H1 (cell line): ENCODE measurements at regions of chr18 and their contacts with region 1.

Region 1: GRCh38 chr18:8357320-8357719 is 251.9 kb upstream of the RAB12 start:
- DNase-seq: no peak
- H3K4me3 ChIP-seq: no peak overlapping the region
- H3K27ac ChIP-seq: no peak overlapping the region
- H3K4me1 ChIP-seq: peaks cover 3 to 15% (median 7%) of the 10 kb centered on the region in 4 experiments; a peak in 6 of 7 replicates
- H3K27me3 ChIP-seq: no peaks in the 10 kb centered on the region
- CTCF ChIP-seq: no peak
- EP300 ChIP-seq: no peak
- POLR2A ChIP-seq: no peak
- RAD21 ChIP-seq: no peak

Region 2: DNA sequence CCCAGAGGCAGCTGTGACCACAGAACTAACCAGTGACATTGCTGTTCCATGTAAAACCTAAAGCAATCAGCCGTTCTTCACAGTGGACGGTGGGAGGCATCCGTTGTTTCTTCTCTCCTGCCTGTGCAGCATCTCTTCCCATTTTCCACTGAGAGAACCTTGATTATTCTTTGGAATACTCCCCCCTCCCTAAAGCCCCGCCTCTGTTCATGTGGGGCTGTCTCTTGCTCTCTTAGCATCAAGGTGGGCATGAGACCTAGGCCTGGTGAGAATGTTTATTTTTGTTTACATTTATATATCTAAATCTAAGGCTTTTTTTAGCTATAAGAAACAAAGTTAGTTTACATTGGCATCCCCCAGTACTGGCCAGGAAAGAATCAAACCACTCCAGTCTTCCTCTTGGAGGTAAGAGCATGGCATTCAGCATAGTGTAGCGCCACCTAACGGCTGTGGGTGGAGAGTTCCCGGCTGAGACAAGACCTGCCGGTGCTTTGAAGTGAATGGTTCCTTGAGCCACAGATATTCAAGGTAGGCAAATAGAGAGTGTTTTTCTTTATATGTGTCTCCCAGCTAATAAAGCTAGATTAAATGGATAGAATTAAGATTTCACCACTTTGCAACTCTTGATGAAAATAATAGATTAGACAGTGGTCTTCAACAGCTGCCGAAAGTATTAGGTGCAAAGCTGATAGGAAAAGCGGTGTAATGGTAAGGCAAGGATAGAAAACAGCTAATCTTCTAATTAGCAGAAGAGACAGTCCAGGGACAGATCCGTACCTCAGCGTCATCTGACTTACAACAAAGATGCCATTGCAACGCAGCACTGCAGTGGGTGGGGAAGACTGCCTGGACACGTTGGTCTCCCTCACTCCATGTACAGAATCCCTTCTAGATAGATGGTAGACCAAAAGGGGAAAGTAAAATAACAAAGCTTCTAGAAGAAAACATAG is 32.3 kb after region 1 on chr18:
- CTCF ChIA-PET with region 1: interaction called, 11 read pairs
- POLR2A ChIA-PET with region 1: no interaction called
- DNase-seq: peak; percentile 66 to 84
- H3K4me3 ChIP-seq: no peak overlapping the region
- H3K27ac ChIP-seq: no peak overlapping the region
- H3K4me1 ChIP-seq: no peaks in the 10 kb centered on the region
- H3K27me3 ChIP-seq: no peaks in the 10 kb centered on the region
- CTCF ChIP-seq: peak; percentile 86 to 96 (median 89)
- EP300 ChIP-seq: no peak
- POLR2A ChIP-seq: no peak
- RAD21 ChIP-seq: peak; percentile 93 to 94